Dorsolateral prefrontal cortex (tissue), 120 donors: ENCODE measurements at regions of chr19 and their contacts with region 1.

Region 1: DNA sequence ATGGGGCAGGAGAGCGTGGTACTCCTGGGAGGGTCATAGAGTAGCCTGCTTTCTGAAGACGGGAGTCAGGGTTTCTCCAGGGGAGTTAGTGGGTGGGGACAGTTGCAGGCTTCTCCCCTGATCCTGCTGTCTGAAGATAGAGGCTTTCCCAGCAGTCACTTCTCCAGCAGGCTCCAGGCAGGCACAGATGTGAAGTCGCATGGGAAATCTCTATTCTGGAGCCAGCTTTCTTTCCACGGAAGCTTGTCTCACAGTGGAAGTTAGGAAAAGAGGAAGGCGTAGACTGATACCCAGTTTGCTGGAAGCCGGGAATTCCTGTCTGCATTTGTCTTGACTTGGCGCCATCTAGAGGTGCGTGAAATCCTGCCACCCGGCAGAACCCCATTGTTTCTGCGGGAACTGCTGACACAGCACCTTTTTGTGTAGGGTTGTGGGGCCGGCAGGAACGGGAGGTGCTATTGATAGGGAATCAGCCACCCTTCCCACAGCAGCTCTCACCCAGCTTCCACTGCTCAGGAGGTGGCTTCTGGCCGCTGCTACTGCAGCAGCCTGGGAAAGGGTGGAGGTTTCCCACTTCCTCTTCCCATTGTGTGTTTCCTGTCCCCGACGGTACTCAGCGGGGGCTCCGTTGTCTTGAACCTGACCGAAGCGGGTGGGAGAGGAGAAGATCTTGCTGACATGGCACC is 28.5 kb upstream of the NPAS1 start:
- DNase-seq: peak; percentile 71 to 90 (median 86)
- H3K4me3 ChIP-seq: peak overlapping the region in 12 of 59 donors; percentile 3 to 28 (median 16)
- H3K27ac ChIP-seq: peak overlapping the region in 58 of 59 donors; percentile 25 to 87 (median 75)
- H3K27me3 ChIP-seq: no peaks in the 10 kb centered on the region
- CTCF ChIP-seq: peak; percentile 84 to 97 (median 91)

Region 2: GRCh38 chr19:46759817-46760333 is 231.3 kb before region 1 on chr19:
- intact Hi-C with region 1: loop called (anchors 5 to 10 kb)
- DNase-seq: no peak
- H3K4me3 ChIP-seq: no peak overlapping the region
- H3K27ac ChIP-seq: peak overlapping the region in 16 of 59 donors; percentile 5 to 56 (median 26)
- H3K27me3 ChIP-seq: no peaks in the 10 kb centered on the region
- CTCF ChIP-seq: no peak

Region 3: GRCh38 chr19:46924874-46925547 is 66.1 kb before region 1 on chr19:
- intact Hi-C with region 1: loop called (anchors 5 kb)
- DNase-seq: no peak
- H3K4me3 ChIP-seq: peak overlapping the region in 40 of 59 donors; percentile 1 to 58 (median 34)
- H3K27ac ChIP-seq: peak overlapping the region; percentile 58 to 98 (median 93)
- H3K27me3 ChIP-seq: no peaks in the 10 kb centered on the region
- CTCF ChIP-seq: no peak

Region 4: DNA sequence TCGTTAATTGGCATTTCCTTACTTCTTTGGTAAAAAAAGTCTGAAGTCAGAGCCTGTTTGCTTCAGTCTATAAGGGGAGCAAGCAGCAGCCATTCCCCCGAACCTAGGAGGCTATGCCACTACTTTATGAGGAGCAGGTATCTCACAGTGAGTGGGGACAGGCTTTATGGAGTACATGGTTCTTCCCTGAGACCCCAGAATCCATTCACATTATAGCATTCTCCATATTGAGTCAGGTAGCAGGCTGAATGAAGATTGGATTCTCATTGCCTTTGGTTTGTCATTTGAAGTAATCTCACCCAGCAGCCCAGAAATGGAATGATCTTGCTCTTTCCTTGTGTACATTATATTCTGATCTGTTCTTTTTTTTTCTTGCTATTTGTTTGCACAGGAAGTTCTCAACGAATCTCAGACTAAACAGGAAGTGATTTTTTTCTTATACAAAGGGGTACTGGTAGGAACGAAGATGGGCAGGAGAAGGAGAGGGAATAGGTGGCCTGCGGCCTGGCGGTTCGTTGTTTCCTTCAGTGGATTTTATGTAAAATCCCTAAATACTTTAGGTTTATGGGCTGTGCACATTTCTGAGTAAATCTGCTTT is 56.0 kb before region 1 on chr19:
- intact Hi-C with region 1: no loop called
- DNase-seq: no peak
- H3K4me3 ChIP-seq: no peak overlapping the region
- H3K27ac ChIP-seq: peak overlapping the region in 33 of 59 donors; percentile 0 to 65 (median 22)
- H3K27me3 ChIP-seq: no peaks in the 10 kb centered on the region
- CTCF ChIP-seq: no peak